Heart right ventricle (tissue), 16 donors: ENCODE measurements at regions of chr5 and their contacts with region 1.

Region 1: DNA sequence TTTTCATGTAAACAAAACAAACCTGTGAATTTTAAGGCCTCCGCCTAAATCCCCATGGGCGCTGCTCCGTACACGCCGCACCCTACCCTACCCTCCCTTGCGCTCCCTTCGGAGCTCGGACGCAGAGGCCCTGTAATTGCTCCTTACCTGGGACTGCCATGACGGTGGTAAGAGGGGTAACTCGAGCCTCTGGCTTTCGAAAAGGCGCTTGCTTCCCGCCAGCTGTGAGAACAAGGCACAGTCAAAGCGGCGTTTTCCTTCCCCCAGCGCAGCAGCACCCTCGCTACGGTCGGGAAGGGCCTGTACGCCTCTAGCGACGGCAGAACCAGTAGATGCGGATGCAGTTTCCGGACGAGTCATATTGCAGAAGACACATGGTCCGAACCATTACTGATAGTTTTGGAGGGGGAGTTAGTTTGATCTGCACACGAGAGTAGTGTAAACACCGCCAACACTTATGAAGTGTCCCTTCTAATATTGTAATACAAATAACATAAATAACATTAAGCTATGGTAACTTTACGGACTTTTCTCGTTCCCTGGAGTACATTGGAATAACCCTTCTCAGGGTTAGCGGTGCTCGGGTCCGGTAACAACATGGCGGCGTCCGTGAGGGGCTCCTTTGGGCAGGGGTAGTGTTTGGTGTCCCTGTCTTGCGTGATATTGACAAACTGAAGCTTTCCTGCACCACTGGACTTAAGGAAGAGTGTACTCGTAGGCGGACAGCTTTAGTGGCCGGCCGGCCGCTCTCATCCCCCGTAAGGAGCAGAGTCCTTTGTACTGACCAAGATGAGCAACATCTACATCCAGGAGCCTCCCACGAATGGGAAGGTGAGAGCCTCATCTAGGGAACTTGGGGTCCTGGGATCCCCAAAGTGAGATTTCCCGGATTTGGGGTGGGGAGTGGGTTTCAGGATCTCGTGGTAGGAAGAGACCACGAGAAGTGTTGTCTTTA is at the starts of genes CWC27 and SREK1IP1:
- DNase-seq: peak; percentile 75 to 82
- ATAC-seq: peak; percentile 97 to 99 (median 98)
- H3K4me3 ChIP-seq: peak within 1 kb of the TSS; percentile 70 to 97 (median 86)
- H3K27ac ChIP-seq: peak within 1 kb of the TSS; percentile 83 to 96 (median 86)
- H3K4me1 ChIP-seq: peaks cover 8 to 66% (median 37%) of the 10 kb centered on the region in 9 donors
- H3K27me3 ChIP-seq: no peaks in the 10 kb centered on the region
- CTCF ChIP-seq: peak in 2 of 9 donors; percentile 30 to 35
- total RNA-seq, gene CWC27: 19.3 to 32.1 (median 23.5) TPM
- total RNA-seq, gene SREK1IP1: 8.0 to 17.3 (median 12.5) TPM

Region 2: GRCh38 chr5:63101870-63102269 is 1666.8 kb before region 1 on chr5:
- intact Hi-C with region 1: loop called in 1 of 10 experiments (anchors 5 kb)
- DNase-seq: no peak
- ATAC-seq: no peak
- H3K4me3 ChIP-seq: no peak overlapping the region
- H3K27ac ChIP-seq: no peak overlapping the region
- H3K4me1 ChIP-seq: no peaks in the 10 kb centered on the region
- H3K27me3 ChIP-seq: no peaks in the 10 kb centered on the region
- CTCF ChIP-seq: no peak

Region 3: DNA sequence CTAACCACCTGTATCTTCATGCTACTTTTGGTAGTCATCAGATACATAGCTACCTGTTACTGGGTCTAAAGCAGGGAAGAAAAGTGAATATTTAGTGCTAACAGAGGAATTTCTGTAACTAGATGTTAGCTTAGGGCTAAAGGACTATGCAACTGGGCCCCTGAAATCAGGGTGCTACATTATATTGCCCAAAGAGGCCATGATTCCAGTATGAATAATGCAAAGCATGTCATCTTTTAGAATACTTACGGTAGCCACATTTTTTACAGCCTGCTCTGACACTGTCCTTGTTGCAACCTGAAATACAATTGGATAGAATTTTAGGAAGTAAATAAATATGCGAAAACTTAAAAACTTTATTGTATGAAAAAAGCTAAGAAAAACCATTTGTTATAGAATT is 14.6 kb before region 1 on chr5:
- intact Hi-C with region 1: no loop called
- DNase-seq: no peak
- ATAC-seq: no peak
- H3K4me3 ChIP-seq: no peak overlapping the region
- H3K27ac ChIP-seq: no peak overlapping the region
- H3K4me1 ChIP-seq: peaks cover 0 to 11% (median 2%) of the 10 kb centered on the region in 9 donors
- H3K27me3 ChIP-seq: no peaks in the 10 kb centered on the region
- CTCF ChIP-seq: no peak

Region 4: DNA sequence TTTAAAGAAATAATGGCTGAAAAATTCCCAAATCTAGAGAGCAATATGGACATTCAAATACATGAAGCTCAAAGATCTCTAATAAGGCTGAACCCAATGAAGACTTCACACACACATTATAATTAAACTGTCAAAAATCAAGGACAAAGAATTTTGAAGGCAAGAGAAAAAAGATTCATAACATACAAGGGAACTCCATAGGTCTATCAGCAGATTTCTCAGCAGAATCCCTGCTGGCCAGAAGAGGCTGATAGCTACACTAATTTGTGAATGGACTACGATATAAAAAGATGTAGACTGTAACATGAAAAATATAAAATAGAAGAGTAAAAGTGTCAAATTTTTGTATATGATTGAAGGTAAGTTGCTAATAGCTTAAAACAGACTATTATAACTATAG is 461.2 kb after region 1 on chr5:
- intact Hi-C with region 1: no loop called
- DNase-seq: no peak
- ATAC-seq: no peak
- H3K4me3 ChIP-seq: no peak overlapping the region
- H3K27ac ChIP-seq: no peak overlapping the region
- H3K4me1 ChIP-seq: no peaks in the 10 kb centered on the region
- H3K27me3 ChIP-seq: no peaks in the 10 kb centered on the region
- CTCF ChIP-seq: no peak